HCT116 (cell line): ENCODE measurements at regions of chr16 and their contacts with region 1.

Region 1: DNA sequence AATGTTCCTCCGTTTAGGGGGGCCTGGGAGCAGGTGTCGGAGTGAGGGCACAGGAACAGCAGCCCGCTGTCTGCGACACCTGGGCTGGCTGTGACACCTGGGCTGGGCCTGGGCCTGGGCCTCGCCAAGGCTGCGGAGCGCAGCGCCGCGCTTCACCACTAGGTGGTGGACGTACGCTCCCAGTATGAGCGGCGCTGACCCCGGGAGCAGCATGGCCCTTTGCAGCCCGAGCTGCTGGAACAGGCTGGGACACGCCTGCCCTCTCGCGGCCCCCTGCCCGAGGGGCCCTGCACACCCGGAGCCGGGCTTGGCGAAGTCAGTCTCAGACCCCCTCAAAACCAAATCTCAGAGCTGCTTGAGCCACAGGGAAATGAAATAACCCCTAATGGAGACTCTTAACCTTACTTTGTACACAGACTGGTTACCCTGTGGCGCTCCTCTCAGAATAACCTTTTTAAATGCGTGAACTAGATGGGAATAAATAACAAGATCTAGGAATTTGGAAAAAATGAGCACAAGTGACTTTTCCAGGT is 38.6 kb upstream of the FA2H start:
- DNase-seq: peak; percentile 76
- ATAC-seq: peak; percentile 100
- H3K4me3 ChIP-seq: 0 out of 4 replicates have a peak overlapping the region, but pooled peaks of 1 of the 2 experiments have one; percentile 15
- H3K27ac ChIP-seq: no peak overlapping the region
- H3K4me1 ChIP-seq: peaks cover 0 to 10% of the 10 kb centered on the region in 2 experiments; a peak in 2 of 4 replicates
- H3K27me3 ChIP-seq: no peaks in the 10 kb centered on the region
- CTCF ChIP-seq: peak; percentile 92 to 99 (median 98)
- POLR2A ChIP-seq: no peak
- RAD21 ChIP-seq: peak; percentile 95

Region 2: DNA sequence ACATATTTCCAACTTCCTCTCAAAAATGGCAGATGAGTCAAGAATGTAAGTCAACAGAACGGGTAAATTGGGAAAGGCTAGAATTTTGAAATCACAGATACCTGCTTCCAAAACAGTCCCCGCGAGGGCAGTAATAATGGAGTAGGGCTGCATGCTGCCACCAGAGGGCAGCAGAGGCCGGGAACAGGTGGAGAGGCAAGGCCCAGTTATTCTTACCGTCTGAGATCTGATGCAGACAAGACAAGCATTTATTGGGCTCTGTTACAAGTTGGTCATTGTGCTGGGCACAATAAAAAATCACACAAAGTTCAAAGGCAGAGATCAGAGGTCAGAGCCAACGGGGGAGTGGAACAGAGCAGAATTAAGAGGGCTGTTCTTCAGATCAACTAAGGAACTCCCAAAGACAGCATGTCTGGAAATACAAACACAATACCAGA is 103.7 kb before region 1 on chr16:
- CTCF ChIA-PET with region 1: interaction called, 4 read pairs
- POLR2A ChIA-PET with region 1: no interaction called
- RAD21 ChIA-PET with region 1: no interaction called
- intact Hi-C with region 1: loop called (anchors 1 kb)
- DNase-seq: peak; percentile 58
- ATAC-seq: peak; percentile 98
- H3K4me3 ChIP-seq: no peak overlapping the region
- H3K27ac ChIP-seq: no peak overlapping the region
- H3K4me1 ChIP-seq: peaks cover 0 to 7% of the 10 kb centered on the region in 2 experiments; a peak in 1 of 4 replicates
- H3K27me3 ChIP-seq: no peaks in the 10 kb centered on the region
- CTCF ChIP-seq: peak; percentile 97 to 99 (median 98)
- POLR2A ChIP-seq: no peak
- RAD21 ChIP-seq: peak; percentile 99